B cell (primary cell): ENCODE measurements at regions of chr5 and their contacts with region 1.

Region 1: DNA sequence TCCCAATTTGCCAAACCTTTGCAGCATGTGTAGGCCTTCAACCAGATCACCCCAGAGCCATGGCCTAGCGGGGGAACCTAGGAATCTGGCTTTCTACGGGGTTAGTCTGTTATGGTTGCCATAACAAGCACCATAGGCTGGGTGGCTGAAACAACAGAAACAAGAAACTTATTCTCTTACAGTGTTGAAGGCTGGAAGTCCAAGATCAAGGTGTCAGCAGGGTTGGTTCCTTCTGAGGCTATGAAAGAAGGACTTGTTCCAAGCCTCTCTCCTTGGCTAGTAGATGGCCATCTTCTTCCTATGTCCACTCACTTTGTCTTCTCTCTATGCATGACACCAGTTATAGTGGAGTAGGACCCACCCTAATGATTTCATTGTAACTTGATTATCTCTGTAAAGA is 6.1 kb downstream of the FGF1 start:
- DNase-seq: no peak
- ATAC-seq: no peak
- H3K4me3 ChIP-seq: no peak overlapping the region
- H3K4me3 Mint-ChIP-seq: no peak overlapping the region
- H3K27ac ChIP-seq: no peak overlapping the region
- H3K27ac Mint-ChIP-seq: no peak overlapping the region
- H3K4me1 ChIP-seq: no peaks in the 10 kb centered on the region
- H3K4me1 Mint-ChIP-seq: no peaks in the 10 kb centered on the region
- H3K27me3 ChIP-seq: no peaks in the 10 kb centered on the region
- H3K27me3 Mint-ChIP-seq: peaks cover 8% of the 10 kb centered on the region
- CTCF ChIP-seq: no peak

Region 2: GRCh38 chr5:141878711-141879425 is 800.9 kb before region 1 on chr5:
- CTCF ChIA-PET with region 1: no interaction called
- POLR2A ChIA-PET with region 1: no interaction called
- intact Hi-C with region 1: no loop called
- DNase-seq: peak; percentile 94
- ATAC-seq: peak; percentile 84
- H3K4me3 ChIP-seq: peak overlapping the region in 4 of 5 experiments; percentile 34 to 65 (median 54)
- H3K4me3 Mint-ChIP-seq: peak overlapping the region; percentile 89
- H3K27ac ChIP-seq: no peak overlapping the region
- H3K27ac Mint-ChIP-seq: peak overlapping the region; percentile 46
- H3K4me1 ChIP-seq: peaks cover 39 to 43% of the 10 kb centered on the region in 2 donors
- H3K4me1 Mint-ChIP-seq: peaks cover 31% of the 10 kb centered on the region
- H3K27me3 ChIP-seq: peaks cover 0 to 88% (median 54%) of the 10 kb centered on the region in 4 experiments
- H3K27me3 Mint-ChIP-seq: peaks cover 72% of the 10 kb centered on the region
- CTCF ChIP-seq: peak; percentile 96

Region 3: DNA sequence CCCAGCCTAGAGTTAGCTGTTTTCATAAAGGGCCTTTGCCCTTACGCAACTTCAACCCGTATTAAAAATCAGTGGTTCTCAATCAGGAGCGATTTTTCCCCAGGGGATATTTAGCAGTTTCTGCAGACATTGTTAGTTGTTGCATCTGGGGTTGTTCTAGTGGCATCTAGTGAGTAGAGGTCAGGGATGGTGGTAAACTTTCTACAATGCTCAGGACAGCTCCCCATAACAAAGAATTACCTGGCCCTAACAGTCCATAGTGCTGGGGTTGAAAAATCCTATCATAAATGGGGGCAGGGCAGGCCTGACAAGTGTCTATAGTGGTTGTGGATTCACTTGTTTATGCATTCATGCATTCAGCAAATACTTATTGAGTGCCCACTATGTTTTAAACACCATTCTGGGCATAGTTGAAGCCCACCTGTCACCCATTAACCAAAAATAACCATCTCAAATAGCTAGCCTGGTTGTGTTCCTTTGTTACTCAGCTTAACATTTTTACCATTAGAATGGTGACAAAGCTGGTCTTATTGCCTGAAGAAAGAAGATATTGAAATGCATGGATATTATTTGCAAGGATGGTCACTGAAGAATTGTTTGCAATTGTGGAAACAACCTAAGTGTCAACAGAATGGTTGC is 22.0 kb after region 1 on chr5:
- CTCF ChIA-PET with region 1: no interaction called
- POLR2A ChIA-PET with region 1: no interaction called
- intact Hi-C with region 1: loop called (anchors 1 kb)
- DNase-seq: no peak
- ATAC-seq: no peak
- H3K4me3 ChIP-seq: no peak overlapping the region
- H3K4me3 Mint-ChIP-seq: no peak overlapping the region
- H3K27ac ChIP-seq: no peak overlapping the region
- H3K27ac Mint-ChIP-seq: no peak overlapping the region
- H3K4me1 ChIP-seq: no peaks in the 10 kb centered on the region
- H3K4me1 Mint-ChIP-seq: no peaks in the 10 kb centered on the region
- H3K27me3 ChIP-seq: peaks cover 0 to 5% (median 4%) of the 10 kb centered on the region in 4 experiments
- H3K27me3 Mint-ChIP-seq: peaks cover 22% of the 10 kb centered on the region
- CTCF ChIP-seq: no peak